SK-N-SH (cell line): ENCODE measurements at regions of chr1 and their contacts with region 1.

Region 1: DNA sequence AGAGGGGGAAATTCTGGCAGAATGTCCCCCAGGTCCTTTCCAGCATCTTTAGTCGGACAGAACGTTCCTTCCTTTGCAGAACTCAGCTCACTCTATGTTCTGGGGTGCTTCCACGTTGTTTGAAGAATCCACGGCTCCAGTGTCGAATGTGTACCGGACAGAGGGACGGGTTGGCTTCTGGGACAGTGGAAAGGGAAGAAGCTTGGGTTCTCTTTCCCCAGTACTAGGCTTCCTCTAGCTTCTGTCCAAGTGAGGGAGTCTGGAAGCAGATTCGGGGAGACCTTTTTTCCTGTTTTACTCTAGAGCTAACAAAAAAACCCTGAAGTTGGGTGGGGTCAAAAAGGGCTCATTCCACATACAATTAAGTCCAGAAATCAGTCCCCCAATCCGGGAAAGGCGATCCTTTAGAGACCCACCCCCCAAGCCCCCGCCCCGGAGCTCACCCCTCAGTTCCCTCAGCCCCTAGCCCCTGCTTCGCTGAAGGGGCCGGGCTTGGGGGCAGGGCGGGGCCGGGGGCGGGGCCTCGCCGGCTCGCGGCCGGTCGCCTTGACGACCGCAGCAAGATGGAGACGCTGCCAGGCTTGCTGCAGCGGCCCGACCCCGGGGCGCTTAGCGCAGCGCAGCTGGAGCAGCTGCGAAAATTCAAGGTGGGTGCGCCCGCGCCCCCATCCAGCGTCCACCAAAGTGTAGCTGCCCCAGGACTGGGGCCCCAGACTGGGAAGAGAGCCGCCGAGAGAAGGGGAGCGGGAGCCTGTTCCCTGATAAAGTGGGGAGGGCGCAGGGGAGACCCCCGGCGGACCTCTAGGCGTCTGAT is at the start of gene RIIAD1:
- DNase-seq: peak; percentile 93
- H3K4me3 ChIP-seq: peak within 1 kb of the TSS; percentile 59 to 73
- H3K27ac ChIP-seq: peak within 1 kb of the TSS in 1 of 2 experiments; percentile 44; a peak in 2 of 4 replicates
- H3K4me1 ChIP-seq: peaks cover 0 to 36% of the 10 kb centered on the region in 2 experiments; a peak in 3 of 4 replicates
- H3K27me3 ChIP-seq: peaks cover 21% of the 10 kb centered on the region
- CTCF ChIP-seq: peak; percentile 45
- EP300 ChIP-seq: no peak
- RAD21 ChIP-seq: peak; percentile 38
- polyA plus RNA-seq, gene RIIAD1: not detected in 2 replicates

Region 2: DNA sequence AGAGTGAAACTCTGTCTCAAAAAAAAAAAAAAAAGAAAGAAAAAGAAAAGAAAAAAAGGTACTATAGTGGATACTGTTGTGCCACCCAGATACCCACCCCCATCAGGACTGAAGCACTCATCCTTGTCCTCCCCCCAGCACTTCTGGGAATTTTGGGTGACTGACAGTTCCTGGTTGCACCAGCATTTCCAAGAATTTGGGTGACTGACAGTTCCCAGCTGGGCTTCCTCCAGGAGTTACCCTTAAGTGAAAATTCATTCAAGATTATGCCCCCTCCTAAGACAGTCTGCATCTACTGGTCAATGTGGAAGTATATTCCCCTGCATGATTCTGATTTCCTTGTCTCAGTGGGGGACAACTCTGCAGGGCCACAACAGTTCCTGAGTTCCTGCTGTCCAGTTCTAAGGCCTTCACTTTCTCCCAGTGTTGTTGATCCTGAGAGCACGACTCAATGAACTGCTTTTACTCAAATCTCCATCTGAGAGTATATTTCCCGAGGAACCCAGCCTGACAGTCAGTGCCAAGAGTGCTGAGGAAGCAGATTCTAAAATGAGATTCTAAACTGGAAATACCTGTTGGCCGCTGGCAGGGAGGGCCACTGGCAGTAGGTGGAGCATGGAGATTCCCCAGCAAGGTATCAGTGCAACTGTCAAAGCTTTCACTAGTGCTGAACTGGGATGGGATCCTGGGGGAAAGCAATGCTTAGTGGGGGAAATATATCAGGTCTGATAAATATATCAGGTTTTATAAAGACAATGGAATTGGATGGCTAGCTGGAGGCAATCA is 18.6 kb after region 1 on chr1:
- CTCF ChIA-PET with region 1: interaction called, 64 read pairs
- POLR2A ChIA-PET with region 1: interaction called, 3 read pairs
- DNase-seq: no peak
- H3K4me3 ChIP-seq: 0 out of 4 replicates have a peak overlapping the region, but pooled peaks of 1 of the 2 experiments have one; percentile 7
- H3K27ac ChIP-seq: no peak overlapping the region
- H3K4me1 ChIP-seq: peaks cover 0 to 2% of the 10 kb centered on the region in 2 experiments; a peak in 1 of 4 replicates
- H3K27me3 ChIP-seq: peaks cover 25% of the 10 kb centered on the region; the same call in 1 of the 2 replicates
- CTCF ChIP-seq: no peak
- EP300 ChIP-seq: no peak
- RAD21 ChIP-seq: no peak

Region 3: DNA sequence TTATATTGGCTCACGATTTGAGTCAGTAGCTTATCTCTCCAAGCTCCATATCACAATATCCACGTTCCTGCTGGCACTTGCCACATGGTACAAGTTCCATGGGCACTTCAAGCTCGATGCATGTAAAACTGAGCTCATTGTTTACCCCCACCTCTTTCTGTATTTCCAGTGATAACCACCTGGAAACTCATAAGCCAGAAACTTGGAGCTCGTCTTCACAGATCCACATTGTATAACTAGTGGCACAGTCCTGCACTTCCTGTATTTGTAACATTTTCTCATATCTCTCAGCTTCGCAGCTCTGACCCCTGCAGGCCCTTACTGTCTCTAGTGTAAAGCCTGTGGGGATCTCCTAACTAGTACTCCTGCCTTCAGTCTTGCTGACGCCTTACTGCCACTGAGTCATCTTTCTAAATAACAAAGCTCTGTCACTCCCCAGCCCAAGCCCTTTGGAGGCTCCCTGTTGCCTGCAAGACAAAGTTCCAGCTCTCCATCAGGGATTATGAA is 124.9 kb after region 1 on chr1:
- CTCF ChIA-PET with region 1: interaction called, 11 read pairs
- POLR2A ChIA-PET with region 1: no interaction called
- DNase-seq: no peak
- H3K4me3 ChIP-seq: no peak overlapping the region
- H3K27ac ChIP-seq: no peak overlapping the region
- H3K4me1 ChIP-seq: peaks cover 0 to 33% of the 10 kb centered on the region in 2 experiments; a peak in 1 of 4 replicates
- H3K27me3 ChIP-seq: peaks cover 5% of the 10 kb centered on the region; the same call in 1 of the 2 replicates
- CTCF ChIP-seq: no peak
- EP300 ChIP-seq: no peak
- RAD21 ChIP-seq: no peak